Activated CD4-positive, alpha-beta T cell treated with anti-CD3 and anti-CD28 coated beads, Interleukin-2, amount 10 ng/mL, durations not matched to agents 24 days and 14 days (primary cell): ENCODE measurements at regions of chr22 and their contacts with region 1.

Region 1: DNA sequence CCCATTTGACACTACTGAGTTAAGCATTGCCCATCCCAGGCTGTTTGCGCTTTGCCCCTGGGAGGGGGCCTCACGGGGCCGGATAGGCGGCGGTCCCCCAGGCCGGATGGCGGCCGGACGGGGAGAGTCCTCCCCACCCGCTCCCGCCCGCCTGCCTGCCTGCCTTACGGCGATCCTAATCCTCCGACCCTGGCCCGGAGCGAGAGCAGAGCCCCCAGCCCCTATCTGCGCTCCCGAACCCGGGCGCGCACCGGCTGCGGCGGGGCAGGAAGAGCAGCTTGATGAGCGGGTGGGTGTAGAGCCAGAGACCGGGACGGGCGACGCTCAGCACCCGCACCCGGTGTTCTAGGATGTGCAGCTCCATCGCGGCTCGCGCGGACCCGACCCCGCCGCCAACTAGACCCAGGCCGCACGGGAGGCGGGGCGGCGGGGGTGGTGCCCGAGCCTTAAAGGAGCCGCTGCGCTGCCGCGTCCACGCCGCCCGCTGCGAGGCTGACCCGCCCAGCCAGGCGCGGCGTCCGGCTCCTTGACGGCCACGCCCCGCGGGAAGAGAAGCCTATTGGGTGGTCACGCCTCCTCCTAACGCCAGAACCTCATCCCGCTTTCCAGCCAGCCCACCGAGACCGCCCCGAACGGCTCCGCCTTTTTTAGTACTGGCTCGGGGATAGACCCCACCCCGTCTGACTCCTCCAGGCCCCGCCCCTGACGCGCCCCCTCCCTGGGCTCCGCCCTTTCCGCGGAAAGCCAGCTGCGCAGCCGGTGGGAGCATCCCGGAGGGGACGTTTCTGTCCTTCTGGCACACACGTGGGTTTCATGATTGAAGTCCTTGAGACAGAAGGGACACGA is at the start of gene CASTOR1:
- DNase-seq: peak; percentile 98
- H3K4me3 Mint-ChIP-seq: peak within 1 kb of the TSS; percentile 86
- H3K27ac Mint-ChIP-seq: peak within 1 kb of the TSS; percentile 83
- H3K4me1 Mint-ChIP-seq: peaks cover 47% of the 10 kb centered on the region
- H3K27me3 Mint-ChIP-seq: no peaks in the 10 kb centered on the region
- total RNA-seq, gene CASTOR1: 4.7 and 7.3 TPM in 2 replicates

Region 2: GRCh38 chr22:29658176-29658575 is 631.2 kb before region 1 on chr22:
- intact Hi-C with region 1: no loop called
- DNase-seq: no peak
- H3K4me3 Mint-ChIP-seq: no peak overlapping the region
- H3K27ac Mint-ChIP-seq: no peak overlapping the region
- H3K4me1 Mint-ChIP-seq: peaks cover 2% of the 10 kb centered on the region
- H3K27me3 Mint-ChIP-seq: no peaks in the 10 kb centered on the region

Region 3: DNA sequence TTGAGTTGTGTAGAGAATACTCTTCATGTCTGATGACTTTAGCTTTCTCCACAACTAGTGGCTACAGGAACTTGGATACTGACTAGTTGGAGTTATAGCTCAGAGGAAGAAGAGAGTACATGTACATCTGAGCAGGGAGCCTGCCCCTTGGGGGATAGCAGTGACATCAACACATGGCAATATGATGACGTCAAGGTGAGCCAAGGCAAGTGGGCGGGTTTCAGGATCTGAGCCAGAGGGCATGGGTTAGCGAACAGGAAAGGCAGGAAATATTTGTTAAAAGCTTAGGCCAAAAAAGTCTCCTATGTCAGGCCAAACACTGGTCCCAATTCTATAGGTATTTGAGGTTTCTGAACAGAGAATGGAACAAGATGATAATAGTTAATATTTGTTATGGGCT is 251.1 kb before region 1 on chr22:
- intact Hi-C with region 1: no loop called
- DNase-seq: no peak
- H3K4me3 Mint-ChIP-seq: no peak overlapping the region
- H3K27ac Mint-ChIP-seq: no peak overlapping the region
- H3K4me1 Mint-ChIP-seq: peaks cover 3% of the 10 kb centered on the region
- H3K27me3 Mint-ChIP-seq: peaks cover 2% of the 10 kb centered on the region

Region 4: DNA sequence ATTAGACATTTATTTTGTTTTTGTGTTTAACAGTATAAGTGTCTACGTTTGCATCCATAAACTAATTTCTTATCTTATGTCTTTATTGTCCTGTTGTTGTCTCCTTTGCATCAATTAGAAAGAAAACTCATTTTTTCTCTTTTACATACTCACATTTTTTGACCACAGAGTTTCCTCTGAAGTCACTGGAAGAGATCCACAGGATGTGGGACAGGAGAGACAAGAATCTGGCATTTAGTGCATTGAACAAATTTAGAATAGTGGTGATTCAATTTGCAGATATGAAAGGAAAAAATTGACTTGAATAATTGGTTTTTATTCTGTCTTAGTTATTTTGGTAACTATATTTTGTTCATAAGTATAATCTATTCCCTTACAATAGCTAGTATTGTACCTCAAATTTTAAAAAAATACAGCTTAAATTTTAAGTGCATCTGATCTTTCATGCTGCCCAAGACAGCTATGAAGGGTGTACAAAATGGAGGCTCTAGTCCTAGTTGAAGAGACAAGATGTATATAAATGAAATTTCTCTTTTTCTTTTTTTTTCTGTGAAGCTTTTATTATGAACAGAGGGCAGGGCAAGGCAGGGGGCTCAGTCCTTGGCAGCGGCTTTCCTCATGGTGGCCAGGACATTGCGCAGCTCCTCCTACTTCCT is 184.7 kb before region 1 on chr22:
- intact Hi-C with region 1: loop called (anchors 1 kb)
- DNase-seq: peak; percentile 79
- H3K4me3 Mint-ChIP-seq: peak overlapping the region; percentile 54
- H3K27ac Mint-ChIP-seq: peak overlapping the region; percentile 89
- H3K4me1 Mint-ChIP-seq: peaks cover 45% of the 10 kb centered on the region
- H3K27me3 Mint-ChIP-seq: no peaks in the 10 kb centered on the region

Region 5: GRCh38 chr22:30178181-30179126 is 110.9 kb before region 1 on chr22:
- intact Hi-C with region 1: no loop called
- DNase-seq: peak; percentile 85
- H3K4me3 Mint-ChIP-seq: peak overlapping the region; percentile 44
- H3K27ac Mint-ChIP-seq: peak overlapping the region; percentile 97
- H3K4me1 Mint-ChIP-seq: peaks cover 67% of the 10 kb centered on the region
- H3K27me3 Mint-ChIP-seq: no peaks in the 10 kb centered on the region

Region 6: DNA sequence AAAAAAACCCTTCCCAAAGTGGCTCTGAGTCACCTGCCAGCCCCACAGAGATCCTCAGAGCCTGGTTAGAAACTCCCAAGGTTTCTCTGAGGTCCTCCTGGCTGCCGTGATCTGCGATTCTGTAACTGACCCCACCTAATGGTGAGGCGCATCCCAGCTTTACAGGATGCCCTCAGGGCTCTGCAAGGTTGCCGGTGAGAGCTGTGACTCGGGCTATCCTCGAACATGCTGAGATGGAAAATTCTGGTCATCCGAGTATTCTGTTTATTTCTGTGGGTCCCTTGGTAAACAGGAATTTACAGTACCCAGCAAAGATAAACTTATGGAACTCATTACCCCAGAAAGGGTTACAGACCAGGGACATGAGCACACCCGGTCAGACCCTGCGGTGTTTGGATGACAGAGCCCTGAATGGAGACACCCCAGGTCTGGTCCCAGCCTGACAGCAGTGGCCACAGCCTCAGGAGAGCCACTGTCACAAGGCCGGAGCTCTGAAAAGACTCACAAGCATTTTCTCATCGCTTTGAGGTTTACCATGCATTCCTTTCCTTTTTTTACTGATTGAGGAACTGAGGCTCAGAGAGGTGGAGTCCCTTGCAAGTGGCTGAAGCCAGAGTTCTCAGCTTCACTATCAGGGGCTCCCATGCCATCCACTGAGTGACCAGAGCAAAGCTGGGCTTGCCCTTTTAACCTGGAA is 65.0 kb before region 1 on chr22:
- intact Hi-C with region 1: no loop called
- DNase-seq: no peak
- H3K4me3 Mint-ChIP-seq: no peak overlapping the region
- H3K27ac Mint-ChIP-seq: peak overlapping the region; percentile 12
- H3K4me1 Mint-ChIP-seq: peaks cover 84% of the 10 kb centered on the region
- H3K27me3 Mint-ChIP-seq: no peaks in the 10 kb centered on the region

Region 7: GRCh38 chr22:30262917-30263741 is 26.2 kb before region 1 on chr22:
- intact Hi-C with region 1: loop called (anchors 1 kb)
- DNase-seq: peak; percentile 95
- H3K4me3 Mint-ChIP-seq: peak overlapping the region; percentile 99
- H3K27ac Mint-ChIP-seq: peak overlapping the region; percentile 90
- H3K4me1 Mint-ChIP-seq: peaks cover 59% of the 10 kb centered on the region
- H3K27me3 Mint-ChIP-seq: no peaks in the 10 kb centered on the region

Region 8: GRCh38 chr22:30326706-30327362 is 37.5 kb after region 1 on chr22 and contains the start of gene TBC1D10A:
- intact Hi-C with region 1: loop called (anchors 1 kb)
- DNase-seq: peak; percentile 98
- H3K4me3 Mint-ChIP-seq: peak within 1 kb of the TSS; percentile 89
- H3K27ac Mint-ChIP-seq: peak within 1 kb of the TSS; percentile 84
- H3K4me1 Mint-ChIP-seq: peaks cover 48% of the 10 kb centered on the region
- H3K27me3 Mint-ChIP-seq: no peaks in the 10 kb centered on the region
- total RNA-seq, gene TBC1D10A: 18.9 and 19.3 TPM in 2 replicates

Region 9: GRCh38 chr22:30386960-30387827 is 97.8 kb after region 1 on chr22 and contains the start of gene RNF215:
- intact Hi-C with region 1: loop called (anchors 1 kb)
- DNase-seq: peak; percentile 96
- H3K4me3 Mint-ChIP-seq: peak within 1 kb of the TSS; percentile 86
- H3K27ac Mint-ChIP-seq: peak within 1 kb of the TSS; percentile 79
- H3K4me1 Mint-ChIP-seq: peaks cover 19% of the 10 kb centered on the region
- H3K27me3 Mint-ChIP-seq: no peaks in the 10 kb centered on the region
- total RNA-seq, gene RNF215: 10.4 and 15.2 TPM in 2 replicates